ENCODE measurements at regions of chr1 and their contacts with region 1.

Region 1: DNA sequence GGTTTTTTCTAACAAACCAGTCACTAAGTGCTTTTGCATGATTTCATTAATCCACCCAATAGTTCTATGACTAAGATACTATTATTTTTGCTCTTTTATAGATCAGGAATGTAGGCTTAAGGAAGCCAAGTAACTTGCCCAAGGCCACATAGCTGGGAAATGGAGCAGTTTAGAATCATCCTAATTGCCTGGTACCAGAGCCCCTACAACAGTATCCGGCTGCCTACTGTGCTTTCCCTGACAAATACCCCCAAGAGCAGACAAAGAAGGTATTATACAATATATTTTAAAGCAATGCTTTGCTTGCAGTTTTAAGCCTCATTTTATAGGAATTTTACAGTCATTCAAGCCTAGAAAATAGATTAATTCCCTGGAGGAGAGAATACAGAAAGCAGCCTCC is 45.5 kb upstream of the RASAL2 start:
- DNase-seq: no peak
- ATAC-seq: no peak
- H3K4me3 ChIP-seq: no peak overlapping the region
- H3K27ac ChIP-seq: no peak overlapping the region
- H3K4me1 ChIP-seq: peaks cover 0 to 14% of the 10 kb centered on the region in 2 donors
- H3K27me3 ChIP-seq: no peaks in the 10 kb centered on the region
- CTCF ChIP-seq: no peak
- POLR2A ChIP-seq: no peak

Region 2: GRCh38 chr1:177959811-177960515 is 88.5 kb before region 1 on chr1:
- in situ Hi-C with region 1: loop called in 1 of 4 experiments (anchors 10 kb)
- intact Hi-C with region 1: no loop called
- DNase-seq: no peak
- ATAC-seq: peak; percentile 64 to 87
- H3K4me3 ChIP-seq: no peak overlapping the region
- H3K27ac ChIP-seq: no peak overlapping the region
- H3K4me1 ChIP-seq: no peaks in the 10 kb centered on the region
- H3K27me3 ChIP-seq: no peaks in the 10 kb centered on the region
- CTCF ChIP-seq: peak in 3 of 5 experiments; percentile 14 to 58 (median 50)
- POLR2A ChIP-seq: no peak